ENCODE measurements at regions of chr5 and their contacts with region 1.

Region 1: GRCh38 chr5:116947691-116948528 is 373.3 kb upstream of the SEMA6A start:
- DNase-seq: peak; percentile 82 to 88
- H3K4me3 ChIP-seq: no peak overlapping the region
- H3K4me1 ChIP-seq: peaks cover 16% of the 10 kb centered on the region
- H3K27me3 ChIP-seq: no peaks in the 10 kb centered on the region

Region 2: GRCh38 chr5:116574367-116575325 is 373.3 kb before region 1 on chr5 and contains the start of gene SEMA6A:
- in situ Hi-C with region 1: loop called (anchors 10 kb)
- DNase-seq: peak; percentile 88 to 98
- H3K4me3 ChIP-seq: peak within 1 kb of the TSS; percentile 79
- H3K4me1 ChIP-seq: peaks cover 19% of the 10 kb centered on the region
- H3K27me3 ChIP-seq: no peaks in the 10 kb centered on the region

Measured in HAP-1 (cell line).